Calu3 (cell line): ENCODE measurements at regions of chr10 and their contacts with region 1.

Region 1: DNA sequence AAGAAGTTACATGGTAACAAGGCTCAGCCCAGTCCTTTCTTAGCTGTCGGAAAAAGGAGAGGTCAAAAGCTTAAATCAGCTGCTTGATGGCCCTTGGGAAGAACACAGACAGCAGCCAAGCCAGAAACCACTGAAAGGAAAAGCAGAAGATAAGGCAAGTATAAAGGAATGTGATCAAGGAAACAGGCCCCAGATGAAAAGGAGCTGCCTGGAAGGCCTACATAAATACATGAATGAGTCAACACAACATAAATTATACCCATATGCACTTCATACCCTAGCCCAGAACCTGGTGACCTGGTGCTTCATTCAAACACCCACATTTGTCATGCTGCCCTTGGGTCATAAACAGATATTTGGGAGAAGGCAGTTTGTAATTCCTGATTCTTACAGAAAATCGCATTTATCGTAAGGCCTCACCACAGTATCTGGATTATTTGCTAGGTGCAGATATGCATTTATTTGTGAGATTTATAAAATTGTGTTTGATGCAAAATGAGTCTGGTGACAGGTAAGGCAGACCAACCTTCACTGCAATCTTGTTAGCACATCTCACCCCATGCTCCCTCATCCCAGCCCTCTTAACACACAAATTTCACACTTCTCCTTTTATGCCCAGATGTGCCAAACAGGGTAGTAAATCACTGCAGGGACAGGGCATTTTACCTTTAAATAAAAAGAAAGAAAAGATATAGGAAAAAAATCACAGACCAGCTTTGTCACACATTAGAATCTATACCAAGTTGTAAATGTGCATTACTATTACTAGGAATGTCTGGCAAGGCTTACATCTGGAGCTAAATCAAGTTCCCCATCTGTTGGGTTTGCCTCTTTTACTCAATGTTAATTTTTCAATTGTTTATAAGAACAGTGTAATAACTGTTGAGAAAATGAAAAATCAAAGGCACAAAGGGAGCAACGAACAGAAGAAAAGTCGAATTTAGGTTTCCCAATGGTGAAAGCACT is 95.0 kb upstream of the KCNIP2 start:
- DNase-seq: peak; percentile 4
- H3K4me3 Mint-ChIP-seq: peak overlapping the region; percentile 8
- H3K27ac Mint-ChIP-seq: peak overlapping the region; percentile 82
- H3K4me1 Mint-ChIP-seq: peaks cover 36% of the 10 kb centered on the region
- H3K27me3 Mint-ChIP-seq: no peaks in the 10 kb centered on the region
- CTCF ChIP-seq: no peak

Region 2: DNA sequence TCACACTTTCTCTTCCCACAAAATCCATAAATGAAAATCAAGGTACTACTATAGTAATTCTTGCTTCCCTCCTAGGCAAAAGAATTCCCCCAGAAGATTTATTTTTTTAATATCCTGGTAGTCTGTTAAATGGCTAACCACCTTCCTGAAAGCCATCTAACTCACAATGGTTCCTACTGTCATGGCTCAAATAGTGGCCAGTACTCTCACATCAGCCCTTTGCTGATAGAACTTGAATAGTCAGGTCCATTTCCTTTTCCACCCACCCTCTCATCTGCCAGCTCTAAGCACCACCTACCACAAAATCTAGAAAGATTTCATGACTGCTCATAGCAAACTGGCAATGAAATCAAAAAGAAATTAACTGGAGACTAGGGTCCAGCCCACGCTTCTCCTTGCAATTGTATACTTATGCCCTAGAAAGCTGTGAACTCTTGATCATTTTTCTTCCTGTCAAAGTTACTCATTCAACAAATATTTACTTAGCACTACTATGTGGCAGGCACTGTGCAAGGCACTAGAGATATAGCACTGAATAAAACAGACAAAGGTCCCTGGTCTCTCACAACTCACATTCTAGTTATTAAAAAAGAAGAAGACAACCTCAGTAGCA is 57.0 kb after region 1 on chr10:
- CTCF ChIA-PET with region 1: interaction called, 3 read pairs
- intact Hi-C with region 1: loop called (anchors 10 kb)
- DNase-seq: peak; percentile 32
- H3K4me3 Mint-ChIP-seq: peak overlapping the region; percentile 32
- H3K27ac Mint-ChIP-seq: peak overlapping the region; percentile 69
- H3K4me1 Mint-ChIP-seq: peaks cover 30% of the 10 kb centered on the region
- H3K27me3 Mint-ChIP-seq: no peaks in the 10 kb centered on the region
- CTCF ChIP-seq: no peak

Region 3: DNA sequence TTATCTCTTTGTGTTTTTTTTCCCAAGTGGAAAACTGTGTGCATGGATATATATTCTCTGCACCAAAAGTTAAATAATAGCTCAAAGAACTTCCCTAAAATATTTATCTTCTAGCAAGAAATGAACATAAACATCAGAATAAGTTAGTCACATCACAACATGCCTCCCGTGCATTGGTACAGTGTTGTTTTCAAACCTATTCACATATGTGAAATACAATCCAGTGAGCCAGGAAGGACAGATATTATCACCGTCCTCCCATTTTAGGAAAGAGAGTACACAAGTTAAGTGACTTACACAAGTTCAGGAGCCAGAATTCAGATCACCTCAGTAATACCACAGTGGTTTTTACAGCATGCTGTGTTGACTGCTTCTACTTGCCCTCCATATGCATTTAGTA is 95.2 kb after region 1 on chr10:
- CTCF ChIA-PET with region 1: no interaction called
- intact Hi-C with region 1: no loop called
- DNase-seq: no peak
- H3K4me3 Mint-ChIP-seq: no peak overlapping the region
- H3K27ac Mint-ChIP-seq: no peak overlapping the region
- H3K4me1 Mint-ChIP-seq: no peaks in the 10 kb centered on the region
- H3K27me3 Mint-ChIP-seq: no peaks in the 10 kb centered on the region
- CTCF ChIP-seq: no peak

Region 4: DNA sequence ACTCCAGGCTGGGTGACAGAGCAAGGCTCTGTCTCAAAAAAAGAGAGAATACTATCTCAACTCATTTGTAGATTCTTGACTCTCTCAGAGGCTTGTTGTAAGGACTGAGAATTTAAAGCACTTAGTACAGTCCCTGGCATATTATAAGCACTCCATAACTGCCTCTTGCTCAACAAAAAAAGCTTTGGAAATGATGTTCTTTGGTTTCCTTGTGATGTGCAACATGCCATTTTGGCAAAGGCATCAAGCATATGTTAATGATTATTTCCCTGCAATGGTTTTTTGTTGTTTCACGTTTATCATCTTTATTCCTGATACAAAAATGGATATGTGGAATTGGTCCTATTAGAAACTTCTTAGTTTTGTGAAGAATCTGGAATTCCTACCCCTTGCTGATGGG is 229.3 kb after region 1 on chr10:
- CTCF ChIA-PET with region 1: no interaction called
- intact Hi-C with region 1: no loop called
- DNase-seq: no peak
- H3K4me3 Mint-ChIP-seq: no peak overlapping the region
- H3K27ac Mint-ChIP-seq: no peak overlapping the region
- H3K4me1 Mint-ChIP-seq: no peaks in the 10 kb centered on the region
- H3K27me3 Mint-ChIP-seq: no peaks in the 10 kb centered on the region
- CTCF ChIP-seq: no peak